Esophagus squamous epithelium (tissue), 5 donors: ENCODE measurements at regions of chr5 and their contacts with region 1.

Region 1: GRCh38 chr5:137498736-137499505 is at the start of gene SPOCK1:
- DNase-seq: no peak
- H3K4me3 ChIP-seq: peak within 1 kb of the TSS; percentile 18 to 70 (median 42)
- H3K27ac ChIP-seq: peak within 1 kb of the TSS in 1 of 4 donors; percentile 9
- H3K4me1 ChIP-seq: peaks cover 5 to 13% (median 10%) of the 10 kb centered on the region in 3 donors
- H3K27me3 ChIP-seq: peaks cover 0 to 61% (median 2%) of the 10 kb centered on the region in 4 donors
- CTCF ChIP-seq: peak; percentile 50 to 90 (median 86)
- POLR2A ChIP-seq: peak in 1 of 4 donors; percentile 27
- total RNA-seq, gene SPOCK1: 0.99 to 21.9 (median 8.1) TPM

Region 2: DNA sequence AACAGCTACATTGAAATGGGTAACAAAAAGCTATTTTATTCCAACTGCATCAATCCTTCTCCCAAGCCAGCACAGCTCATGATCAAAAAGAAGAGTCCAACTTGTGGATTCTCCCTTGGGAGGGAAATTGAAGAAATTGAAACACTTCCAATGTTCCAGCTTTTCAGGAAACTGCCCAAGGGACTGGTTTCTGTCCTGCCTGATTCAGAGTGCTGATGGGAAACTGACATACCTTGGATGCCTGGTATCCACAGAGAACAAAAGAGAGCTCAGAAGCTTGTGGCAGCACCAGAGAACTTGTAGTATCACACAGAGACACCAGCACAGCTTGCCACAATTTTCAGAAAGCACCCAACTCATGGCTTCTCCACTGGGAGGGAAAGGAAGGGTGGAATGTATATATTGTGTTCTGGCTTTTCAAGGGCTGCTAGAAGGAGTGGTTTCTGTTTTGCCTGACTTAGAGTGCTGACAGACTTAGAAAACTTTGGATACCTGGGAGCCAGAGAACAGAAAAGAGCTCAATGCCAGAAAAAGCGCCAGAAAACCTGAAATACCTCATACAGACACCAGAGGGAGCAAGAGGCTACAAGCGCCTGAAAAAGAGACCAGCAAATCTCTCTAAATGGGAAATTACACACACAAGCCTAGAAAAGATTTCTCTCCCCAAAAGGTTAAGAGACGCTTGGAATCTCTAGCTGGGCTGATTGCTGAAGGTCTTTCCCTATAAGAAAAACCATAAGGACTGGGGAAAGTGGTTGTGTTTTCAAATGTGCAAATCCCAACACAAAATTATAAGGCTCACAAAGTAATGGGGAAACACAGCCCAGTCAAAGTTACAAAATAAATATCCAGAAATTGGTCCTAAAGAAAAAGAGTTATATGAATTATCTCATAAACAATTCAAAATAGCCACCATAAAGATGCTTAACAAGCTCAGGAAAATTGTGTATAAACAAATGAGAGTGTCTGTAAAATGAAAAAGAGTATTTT is 178.6 kb before region 1 on chr5:
- intact Hi-C with region 1: loop called (anchors 5 kb)
- DNase-seq: no peak
- H3K4me3 ChIP-seq: no peak overlapping the region
- H3K27ac ChIP-seq: no peak overlapping the region
- H3K4me1 ChIP-seq: no peaks in the 10 kb centered on the region
- H3K27me3 ChIP-seq: peaks cover 0 to 18% (median 0%) of the 10 kb centered on the region in 4 donors
- CTCF ChIP-seq: peak; percentile 37 to 77 (median 72)
- POLR2A ChIP-seq: no peak

Region 3: GRCh38 chr5:137344723-137345322 is 154.1 kb before region 1 on chr5:
- intact Hi-C with region 1: loop called (anchors 10 kb)
- DNase-seq: no peak
- H3K4me3 ChIP-seq: no peak overlapping the region
- H3K27ac ChIP-seq: no peak overlapping the region
- H3K4me1 ChIP-seq: no peaks in the 10 kb centered on the region
- H3K27me3 ChIP-seq: no peaks in the 10 kb centered on the region
- CTCF ChIP-seq: peak in 5 of 6 experiments; percentile 63 to 80 (median 67)
- POLR2A ChIP-seq: no peak